WTC11 (cell line): ENCODE measurements at regions of chr14 and their contacts with region 1.

Region 1: GRCh38 chr14:22200977-22201605 is 387.9 kb downstream of the DAD1 start:
- DNase-seq: peak; percentile 10
- ATAC-seq: peak; percentile 95
- H3K4me3 Mint-ChIP-seq: no peak overlapping the region
- H3K27ac Mint-ChIP-seq: no peak overlapping the region
- H3K4me1 Mint-ChIP-seq: no peaks in the 10 kb centered on the region
- H3K27me3 Mint-ChIP-seq: peaks cover 3% of the 10 kb centered on the region; the same call in 1 of the 2 replicates
- CTCF ChIP-seq: peak; percentile 60

Region 2: GRCh38 chr14:21768116-21768874 is 432.8 kb before region 1 on chr14:
- CTCF ChIA-PET with region 1: no interaction called
- POLR2A ChIA-PET with region 1: no interaction called
- DNase-seq: no peak
- ATAC-seq: peak; percentile 98
- H3K4me3 Mint-ChIP-seq: no peak overlapping the region
- H3K27ac Mint-ChIP-seq: no peak overlapping the region; the same call in 1 of the 2 replicates
- H3K4me1 Mint-ChIP-seq: peaks cover 14% of the 10 kb centered on the region
- H3K27me3 Mint-ChIP-seq: peaks cover 14% of the 10 kb centered on the region
- CTCF ChIP-seq: no peak

Region 3: GRCh38 chr14:22026527-22026926 is 174.6 kb before region 1 on chr14:
- CTCF ChIA-PET with region 1: no interaction called
- POLR2A ChIA-PET with region 1: no interaction called
- DNase-seq: no peak
- ATAC-seq: no peak
- H3K4me3 Mint-ChIP-seq: no peak overlapping the region
- H3K27ac Mint-ChIP-seq: no peak overlapping the region
- H3K4me1 Mint-ChIP-seq: no peaks in the 10 kb centered on the region
- H3K27me3 Mint-ChIP-seq: peaks cover 5% of the 10 kb centered on the region; the same call in 1 of the 2 replicates
- CTCF ChIP-seq: no peak

Region 4: DNA sequence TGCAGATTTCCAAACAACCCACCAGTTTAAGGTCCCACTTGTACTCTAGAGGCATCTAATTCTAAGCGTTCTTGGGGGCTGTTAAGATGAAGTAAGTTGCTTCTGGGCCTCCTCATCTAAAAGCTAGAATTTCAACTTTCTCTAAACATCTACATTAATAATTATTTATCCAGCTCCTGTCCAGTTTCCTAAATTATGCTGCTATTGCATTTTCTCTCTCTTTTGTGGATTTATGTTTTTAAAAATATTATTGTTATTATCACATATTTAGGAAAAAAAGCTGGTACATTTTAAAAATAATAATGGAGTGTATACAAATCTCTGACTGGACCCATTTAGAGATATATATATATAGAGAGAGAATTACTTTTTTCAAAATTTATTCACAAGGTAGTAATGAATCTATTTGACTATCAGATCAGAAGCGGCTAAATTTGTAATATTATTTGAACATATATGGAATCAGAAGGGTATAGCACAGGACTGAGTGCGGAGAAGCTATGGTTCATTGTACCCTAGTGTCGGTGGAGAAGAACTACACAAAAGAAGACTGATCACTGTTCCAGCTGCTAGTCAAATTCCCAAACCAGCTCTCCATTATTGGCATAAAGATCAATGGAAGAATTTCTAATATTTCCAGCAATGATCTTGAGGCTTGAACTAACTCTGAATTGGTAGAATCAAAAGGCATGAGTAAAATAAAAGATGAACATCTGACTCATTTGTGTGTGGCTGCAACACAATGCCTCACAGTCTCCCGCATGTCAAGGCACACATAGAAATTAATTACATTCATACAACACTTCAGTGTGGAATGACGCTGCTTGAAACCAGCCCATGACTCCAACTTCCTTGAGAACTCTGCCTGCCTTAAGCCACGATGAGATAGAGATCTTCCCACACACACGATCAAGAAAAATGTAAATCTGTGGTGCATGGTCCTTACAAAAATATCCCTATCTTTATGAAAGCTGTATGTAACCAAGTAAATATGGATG is 94.1 kb before region 1 on chr14:
- CTCF ChIA-PET with region 1: interaction called, 17 read pairs
- POLR2A ChIA-PET with region 1: no interaction called
- DNase-seq: no peak
- ATAC-seq: peak; percentile 28; the same call in 1 of the 2 replicates
- H3K4me3 Mint-ChIP-seq: no peak overlapping the region
- H3K27ac Mint-ChIP-seq: no peak overlapping the region
- H3K4me1 Mint-ChIP-seq: no peaks in the 10 kb centered on the region
- H3K27me3 Mint-ChIP-seq: no peaks in the 10 kb centered on the region; the same call in 1 of the 2 replicates
- CTCF ChIP-seq: no peak

Region 5: GRCh38 chr14:22163051-22163450 is 38.0 kb before region 1 on chr14:
- CTCF ChIA-PET with region 1: interaction called, 31 read pairs
- POLR2A ChIA-PET with region 1: no interaction called
- DNase-seq: no peak
- ATAC-seq: peak; percentile 71
- H3K4me3 Mint-ChIP-seq: no peak overlapping the region
- H3K27ac Mint-ChIP-seq: no peak overlapping the region
- H3K4me1 Mint-ChIP-seq: peaks cover 24% of the 10 kb centered on the region
- H3K27me3 Mint-ChIP-seq: no peaks in the 10 kb centered on the region
- CTCF ChIP-seq: no peak

Region 6: GRCh38 chr14:22185191-22185590 is 15.9 kb before region 1 on chr14:
- CTCF ChIA-PET with region 1: interaction called, 32 read pairs
- POLR2A ChIA-PET with region 1: no interaction called
- DNase-seq: no peak
- ATAC-seq: peak; percentile 39; the same call in 1 of the 2 replicates
- H3K4me3 Mint-ChIP-seq: no peak overlapping the region
- H3K27ac Mint-ChIP-seq: no peak overlapping the region
- H3K4me1 Mint-ChIP-seq: no peaks in the 10 kb centered on the region
- H3K27me3 Mint-ChIP-seq: no peaks in the 10 kb centered on the region
- CTCF ChIP-seq: no peak

Region 7: GRCh38 chr14:22252686-22253085 is 51.6 kb after region 1 on chr14:
- CTCF ChIA-PET with region 1: interaction called, 11 read pairs
- POLR2A ChIA-PET with region 1: no interaction called
- DNase-seq: no peak
- ATAC-seq: no peak
- H3K4me3 Mint-ChIP-seq: no peak overlapping the region
- H3K27ac Mint-ChIP-seq: no peak overlapping the region
- H3K4me1 Mint-ChIP-seq: peaks cover 18% of the 10 kb centered on the region
- H3K27me3 Mint-ChIP-seq: no peaks in the 10 kb centered on the region
- CTCF ChIP-seq: no peak

Region 8: DNA sequence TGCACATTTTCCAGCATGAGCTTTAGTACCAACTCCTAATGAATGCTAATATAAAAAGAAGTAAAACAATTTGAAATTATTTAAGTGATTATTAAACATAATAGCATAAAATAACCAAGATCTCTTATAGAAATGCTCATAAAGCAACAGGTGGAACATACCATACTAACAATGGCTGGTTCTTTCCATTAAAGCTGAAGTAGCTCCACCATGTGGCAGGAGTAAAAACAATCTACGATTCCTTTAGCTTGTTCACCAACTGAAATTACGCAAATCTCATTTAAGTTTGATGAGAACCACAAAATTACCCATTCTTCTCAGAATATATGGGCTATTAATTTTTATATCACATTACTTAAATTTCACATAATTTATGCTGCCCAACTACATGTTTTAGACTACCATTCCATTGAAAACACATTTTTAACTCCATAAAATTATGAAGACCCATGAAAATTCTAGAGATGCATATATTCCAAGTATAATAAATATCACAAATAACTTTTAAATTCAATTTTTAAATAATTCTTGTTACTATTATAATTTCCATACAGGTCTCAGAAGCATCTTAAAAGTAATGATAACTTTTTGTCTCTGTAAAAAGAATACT is 174.3 kb after region 1 on chr14:
- CTCF ChIA-PET with region 1: interaction called, 23 read pairs
- POLR2A ChIA-PET with region 1: no interaction called
- DNase-seq: no peak
- ATAC-seq: no peak
- H3K4me3 Mint-ChIP-seq: no peak overlapping the region
- H3K27ac Mint-ChIP-seq: no peak overlapping the region
- H3K4me1 Mint-ChIP-seq: no peaks in the 10 kb centered on the region
- H3K27me3 Mint-ChIP-seq: peaks cover 3% of the 10 kb centered on the region; the same call in 1 of the 2 replicates
- CTCF ChIP-seq: no peak